ENCODE measurements at regions of chr2 and their contacts with region 1.

Region 1: GRCh38 chr2:199926806-199927205 is 15.7 kb downstream of the C2orf69 start:
- DNase-seq: no peak
- ATAC-seq: no peak
- H3K4me3 ChIP-seq: no peak overlapping the region
- H3K4me3 Mint-ChIP-seq: no peak overlapping the region
- H3K27ac ChIP-seq: no peak overlapping the region
- H3K27ac Mint-ChIP-seq: peak overlapping the region in 3 of 9 donors; percentile 20 to 45 (median 32)
- H3K4me1 ChIP-seq: no peaks in the 10 kb centered on the region
- H3K4me1 Mint-ChIP-seq: peaks cover 5 to 32% (median 7%) of the 10 kb centered on the region in 7 donors
- H3K27me3 ChIP-seq: no peaks in the 10 kb centered on the region
- H3K27me3 Mint-ChIP-seq: no peaks in the 10 kb centered on the region

Region 2: DNA sequence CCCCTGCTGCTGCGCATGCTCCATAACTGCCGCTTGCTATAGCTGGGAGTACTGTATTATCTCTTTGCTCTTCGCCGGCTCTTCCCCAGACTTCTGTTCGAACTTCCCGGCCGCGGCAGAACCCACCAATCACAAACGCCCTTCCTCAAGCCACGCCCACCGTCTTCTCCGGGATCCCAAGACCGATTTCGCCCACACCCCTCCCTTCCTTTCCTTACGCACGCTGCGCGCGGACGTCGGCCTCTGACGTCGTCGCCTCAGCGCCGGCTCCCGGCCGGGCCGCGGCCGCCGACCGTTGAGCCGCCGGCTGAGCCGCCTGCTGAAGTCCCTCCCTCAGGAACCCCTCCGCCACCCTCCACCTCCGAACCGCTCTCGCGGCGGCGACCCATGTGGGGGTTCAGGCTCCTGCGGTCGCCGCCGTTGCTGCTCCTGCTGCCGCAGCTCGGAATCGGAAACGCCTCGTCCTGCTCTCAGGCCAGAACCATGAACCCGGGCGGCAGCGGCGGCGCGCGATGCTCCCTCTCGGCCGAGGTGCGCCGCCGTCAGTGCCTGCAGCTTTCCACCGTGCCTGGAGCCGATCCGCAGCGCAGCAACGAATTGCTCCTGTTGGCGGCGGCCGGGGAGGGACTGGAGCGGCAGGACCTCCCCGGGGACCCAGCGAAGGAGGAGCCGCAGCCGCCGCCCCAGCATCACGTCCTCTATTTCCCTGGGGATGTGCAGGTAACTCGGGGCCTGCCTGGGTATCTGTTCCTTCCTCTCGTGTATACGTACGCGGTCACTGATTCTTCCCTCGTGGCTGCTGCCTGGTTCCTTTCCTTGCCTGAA is 15.5 kb before region 1 on chr2 and contains the start of gene C2orf69:
- CTCF ChIA-PET with region 1: no interaction called
- POLR2A ChIA-PET with region 1: interaction called, 5 read pairs
- intact Hi-C with region 1: loop called in 1 of 2 experiments (anchors 1 kb)
- DNase-seq: peak; percentile 80 to 92 (median 83)
- ATAC-seq: peak; percentile 93
- H3K4me3 ChIP-seq: peak within 1 kb of the TSS; percentile 75
- H3K4me3 Mint-ChIP-seq: peak within 1 kb of the TSS; percentile 89 to 100 (median 98)
- H3K27ac ChIP-seq: peak within 1 kb of the TSS; percentile 89
- H3K27ac Mint-ChIP-seq: peak within 1 kb of the TSS; percentile 72 to 95 (median 94)
- H3K4me1 ChIP-seq: peaks cover 11 to 19% of the 10 kb centered on the region in 2 donors
- H3K4me1 Mint-ChIP-seq: peaks cover 26 to 47% (median 37%) of the 10 kb centered on the region in 7 donors
- H3K27me3 ChIP-seq: no peaks in the 10 kb centered on the region
- H3K27me3 Mint-ChIP-seq: peaks cover 0 to 14% (median 8%) of the 10 kb centered on the region in 5 donors
- total RNA-seq, gene C2orf69: 10.1 to 15.4 (median 12.7) TPM

Region 3: GRCh38 chr2:199940373-199940772 is 13.6 kb after region 1 on chr2:
- CTCF ChIA-PET with region 1: interaction called, 3 read pairs
- POLR2A ChIA-PET with region 1: no interaction called
- intact Hi-C with region 1: loop called in 1 of 2 experiments (anchors 2 kb)
- DNase-seq: peak in 3 of 9 donors; percentile 9 to 18 (median 11)
- ATAC-seq: no peak
- H3K4me3 ChIP-seq: no peak overlapping the region
- H3K4me3 Mint-ChIP-seq: no peak overlapping the region
- H3K27ac ChIP-seq: no peak overlapping the region
- H3K27ac Mint-ChIP-seq: no peak overlapping the region
- H3K4me1 ChIP-seq: no peaks in the 10 kb centered on the region
- H3K4me1 Mint-ChIP-seq: peaks cover 0 to 19% (median 14%) of the 10 kb centered on the region in 7 donors
- H3K27me3 ChIP-seq: no peaks in the 10 kb centered on the region
- H3K27me3 Mint-ChIP-seq: no peaks in the 10 kb centered on the region

Region 4: GRCh38 chr2:200156166-200156835 is 229.5 kb after region 1 on chr2:
- CTCF ChIA-PET with region 1: no interaction called
- POLR2A ChIA-PET with region 1: no interaction called
- intact Hi-C with region 1: no loop called
- DNase-seq: no peak
- ATAC-seq: no peak
- H3K4me3 ChIP-seq: no peak overlapping the region
- H3K4me3 Mint-ChIP-seq: no peak overlapping the region
- H3K27ac ChIP-seq: no peak overlapping the region
- H3K27ac Mint-ChIP-seq: no peak overlapping the region
- H3K4me1 ChIP-seq: no peaks in the 10 kb centered on the region
- H3K4me1 Mint-ChIP-seq: peaks cover 0 to 5% (median 0%) of the 10 kb centered on the region in 7 donors
- H3K27me3 ChIP-seq: no peaks in the 10 kb centered on the region
- H3K27me3 Mint-ChIP-seq: peaks cover 0 to 7% (median 5%) of the 10 kb centered on the region in 5 donors

Measured in naive thymus-derived CD4-positive, alpha-beta T cell (primary cell).